Heart right ventricle (tissue), 16 donors: ENCODE measurements at regions of chr10 and their contacts with region 1.

Region 1: DNA sequence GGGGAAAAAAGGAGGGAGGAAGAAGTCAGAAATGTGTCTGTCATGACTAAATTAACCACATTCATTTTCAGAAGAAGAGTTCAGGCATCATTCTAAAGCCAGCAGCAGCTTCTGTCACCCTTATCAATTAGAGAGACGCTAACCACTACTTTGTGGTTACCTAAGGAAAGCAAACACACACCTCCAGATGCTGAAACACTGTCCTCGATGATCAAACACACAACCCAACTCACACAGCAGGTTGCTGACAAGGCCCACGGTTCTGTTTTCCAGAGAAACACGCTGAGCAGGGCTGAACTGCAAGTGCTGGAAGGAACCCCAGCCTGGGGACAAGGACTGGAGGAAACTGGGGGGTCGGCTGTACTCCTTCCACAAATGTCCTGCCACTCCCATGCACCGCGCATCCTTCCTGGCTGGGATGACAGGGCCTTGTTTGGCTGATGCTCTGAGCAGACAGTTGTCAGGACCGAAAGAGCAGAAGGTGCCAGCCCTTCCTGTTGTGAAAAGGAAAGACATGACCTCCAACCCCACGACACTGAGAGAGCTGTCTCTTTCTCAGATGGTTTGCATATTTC is 36.6 kb downstream of the PRKCQ start:
- DNase-seq: no peak
- ATAC-seq: no peak
- H3K4me3 ChIP-seq: peak overlapping the region in 1 of 10 donors; percentile 34
- H3K27ac ChIP-seq: peak overlapping the region in 1 of 10 donors; percentile 84
- H3K4me1 ChIP-seq: peaks cover 0 to 17% (median 0%) of the 10 kb centered on the region in 9 donors
- H3K27me3 ChIP-seq: peaks cover 0 to 47% (median 0%) of the 10 kb centered on the region in 7 donors
- CTCF ChIP-seq: no peak

Region 2: GRCh38 chr10:6558759-6559461 is 15.4 kb after region 1 on chr10:
- intact Hi-C with region 1: loop called in 1 of 10 experiments (anchors 1 kb)
- DNase-seq: no peak
- ATAC-seq: no peak
- H3K4me3 ChIP-seq: no peak overlapping the region
- H3K27ac ChIP-seq: peak overlapping the region in 1 of 10 donors; percentile 56
- H3K4me1 ChIP-seq: peaks cover 0 to 24% (median 0%) of the 10 kb centered on the region in 9 donors
- H3K27me3 ChIP-seq: peaks cover 0 to 29% (median 0%) of the 10 kb centered on the region in 7 donors
- CTCF ChIP-seq: no peak